CD4-positive, alpha-beta T cell (primary cell): ENCODE measurements at regions of chr13 and their contacts with region 1.

Region 1: DNA sequence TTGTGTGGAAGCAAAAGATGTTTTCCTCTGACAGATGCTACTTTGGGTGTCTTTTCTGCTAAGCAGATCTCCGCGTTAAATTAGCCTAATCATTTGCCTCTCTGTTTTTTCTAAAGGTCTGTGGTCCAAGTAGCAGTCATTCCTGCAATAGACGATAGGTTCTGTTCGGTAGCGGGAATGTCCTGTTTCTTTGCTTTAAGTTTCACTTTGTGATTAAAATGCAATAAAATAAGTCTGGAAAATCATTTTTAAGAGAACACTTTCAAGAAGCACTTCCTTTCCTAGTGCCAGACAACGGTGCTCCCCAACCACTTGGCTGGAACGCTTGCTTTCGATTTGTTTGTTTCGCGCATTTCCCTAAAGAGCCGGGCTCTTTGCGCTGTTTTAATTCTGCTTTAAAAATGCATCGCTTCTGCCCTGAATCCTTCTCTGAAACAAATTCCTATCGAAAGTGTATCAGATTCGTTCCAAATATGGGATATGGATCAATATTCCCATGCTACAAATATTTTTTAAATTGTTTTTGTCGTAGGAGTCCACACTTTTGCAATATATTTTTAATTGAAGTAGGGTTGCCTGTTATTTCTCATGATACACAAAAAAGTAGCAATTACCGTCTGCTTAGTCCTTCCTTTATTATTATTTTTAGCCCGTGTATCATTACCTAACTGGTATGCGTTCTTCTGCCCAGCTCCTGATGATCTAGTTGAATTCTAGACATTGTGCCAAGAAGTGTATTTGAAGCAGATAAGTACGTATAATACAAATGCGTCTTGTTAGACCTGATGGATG is 14.2 kb downstream of the ZIC2 start:
- DNase-seq: peak in 1 of 14 experiments; percentile 33
- ATAC-seq: no peak
- H3K4me3 ChIP-seq: no peak overlapping the region
- H3K4me3 Mint-ChIP-seq: no peak overlapping the region
- H3K27ac ChIP-seq: no peak overlapping the region
- H3K27ac Mint-ChIP-seq: no peak overlapping the region
- H3K4me1 ChIP-seq: peaks cover 27% of the 10 kb centered on the region
- H3K4me1 Mint-ChIP-seq: peaks cover 11% of the 10 kb centered on the region
- H3K27me3 ChIP-seq: peaks cover 77 to 93% of the 10 kb centered on the region in 2 experiments
- H3K27me3 Mint-ChIP-seq: peaks cover 90% of the 10 kb centered on the region
- CTCF ChIP-seq: no peak

Region 2: DNA sequence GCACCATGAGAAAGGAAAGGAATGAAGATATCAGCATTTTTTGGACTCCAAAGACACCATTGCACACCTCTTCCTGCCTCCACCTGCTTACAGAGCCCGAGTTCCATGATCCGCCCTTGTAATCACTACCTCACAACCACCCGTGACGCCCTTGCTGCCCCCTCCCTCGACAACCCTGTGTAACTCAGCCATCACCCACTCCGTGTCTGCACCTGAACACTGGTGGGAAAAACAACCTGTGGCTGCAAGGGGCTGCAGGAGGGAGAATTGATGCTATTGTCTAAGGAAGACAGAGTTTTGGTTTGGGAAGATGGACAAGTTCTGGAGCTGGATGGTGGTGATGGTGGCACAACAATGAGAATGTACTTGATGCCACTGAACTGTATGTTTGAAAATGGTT is 51.2 kb before region 1 on chr13:
- CTCF ChIA-PET with region 1: no interaction called
- POLR2A ChIA-PET with region 1: no interaction called
- intact Hi-C with region 1: no loop called
- DNase-seq: no peak
- ATAC-seq: no peak
- H3K4me3 ChIP-seq: no peak overlapping the region
- H3K4me3 Mint-ChIP-seq: no peak overlapping the region
- H3K27ac ChIP-seq: no peak overlapping the region
- H3K27ac Mint-ChIP-seq: no peak overlapping the region
- H3K4me1 ChIP-seq: no peaks in the 10 kb centered on the region
- H3K4me1 Mint-ChIP-seq: no peaks in the 10 kb centered on the region
- H3K27me3 ChIP-seq: peaks cover 15 to 33% of the 10 kb centered on the region in 2 experiments
- H3K27me3 Mint-ChIP-seq: peaks cover 71% of the 10 kb centered on the region
- CTCF ChIP-seq: no peak

Region 3: DNA sequence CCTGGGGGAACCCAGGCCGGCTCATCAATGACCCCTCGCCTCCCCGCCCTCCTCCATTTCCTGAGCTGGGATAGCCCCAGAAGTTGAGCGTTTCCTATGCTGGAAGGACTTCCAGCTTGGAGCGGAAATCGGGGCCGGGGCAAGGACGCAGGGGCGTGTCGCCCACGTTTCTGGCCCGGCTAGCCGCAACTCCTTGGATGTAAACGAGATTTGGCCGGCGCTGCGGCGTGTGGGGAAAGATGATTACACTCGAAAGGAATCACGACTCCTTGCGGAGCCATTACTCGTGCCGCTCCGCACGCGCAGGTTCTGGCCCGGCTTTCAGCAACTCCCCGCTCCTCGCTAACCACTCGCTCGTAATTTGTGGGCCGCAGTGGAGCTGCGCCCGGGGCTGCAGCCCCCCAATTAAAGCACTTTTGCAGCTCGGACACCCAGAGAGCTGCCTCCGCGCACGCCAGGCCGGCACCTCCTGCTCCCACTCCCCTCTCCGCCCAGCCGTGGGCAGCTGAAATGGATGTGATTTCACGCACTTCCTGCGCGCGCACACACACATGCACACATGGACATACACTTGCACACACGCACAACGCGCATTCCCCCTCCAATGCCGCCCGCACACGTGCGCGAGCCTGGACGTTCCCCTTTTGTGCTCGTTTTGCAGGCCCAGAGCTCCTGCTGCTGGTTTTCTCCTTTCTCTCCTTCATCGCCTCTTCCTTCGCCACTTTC is 39.9 kb before region 1 on chr13:
- CTCF ChIA-PET with region 1: no interaction called
- POLR2A ChIA-PET with region 1: no interaction called
- intact Hi-C with region 1: loop called (anchors 2 to 5 kb)
- DNase-seq: peak in 2 of 14 experiments; percentile 25
- ATAC-seq: no peak
- H3K4me3 ChIP-seq: peak overlapping the region; percentile 22
- H3K4me3 Mint-ChIP-seq: peak overlapping the region; percentile 67
- H3K27ac ChIP-seq: no peak overlapping the region
- H3K27ac Mint-ChIP-seq: no peak overlapping the region
- H3K4me1 ChIP-seq: peaks cover 46% of the 10 kb centered on the region
- H3K4me1 Mint-ChIP-seq: peaks cover 37% of the 10 kb centered on the region
- H3K27me3 ChIP-seq: peaks cover 74 to 78% of the 10 kb centered on the region in 2 experiments
- H3K27me3 Mint-ChIP-seq: peaks cover 96% of the 10 kb centered on the region
- CTCF ChIP-seq: no peak

Region 4: GRCh38 chr13:100014621-100015020 is 18.8 kb after region 1 on chr13:
- CTCF ChIA-PET with region 1: no interaction called
- POLR2A ChIA-PET with region 1: no interaction called
- intact Hi-C with region 1: no loop called
- DNase-seq: no peak
- ATAC-seq: no peak
- H3K4me3 ChIP-seq: no peak overlapping the region
- H3K4me3 Mint-ChIP-seq: no peak overlapping the region
- H3K27ac ChIP-seq: no peak overlapping the region
- H3K27ac Mint-ChIP-seq: no peak overlapping the region
- H3K4me1 ChIP-seq: no peaks in the 10 kb centered on the region
- H3K4me1 Mint-ChIP-seq: no peaks in the 10 kb centered on the region
- H3K27me3 ChIP-seq: peaks cover 0 to 2% of the 10 kb centered on the region in 2 experiments
- H3K27me3 Mint-ChIP-seq: peaks cover 22% of the 10 kb centered on the region
- CTCF ChIP-seq: no peak

Region 5: DNA sequence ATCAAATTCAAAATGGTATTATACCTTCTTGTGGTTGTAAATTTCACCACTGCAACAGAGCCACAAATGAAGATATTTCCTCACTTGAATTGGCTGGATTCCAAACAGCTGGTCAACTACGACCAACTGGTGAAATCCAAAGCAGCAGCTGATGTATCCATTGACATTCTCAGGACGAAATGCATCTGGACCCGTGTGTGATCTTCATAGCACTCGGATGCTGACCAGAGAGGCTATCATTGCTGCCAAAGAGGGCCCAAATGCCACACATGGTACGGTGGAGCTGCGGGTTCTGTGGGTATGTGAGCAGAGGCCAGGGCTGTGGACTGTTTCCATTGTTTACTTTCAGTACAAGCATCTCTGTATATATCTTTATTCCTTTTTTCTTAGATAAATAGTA is 67.5 kb after region 1 on chr13:
- CTCF ChIA-PET with region 1: no interaction called
- POLR2A ChIA-PET with region 1: no interaction called
- intact Hi-C with region 1: no loop called
- DNase-seq: no peak
- ATAC-seq: no peak
- H3K4me3 ChIP-seq: no peak overlapping the region
- H3K4me3 Mint-ChIP-seq: no peak overlapping the region
- H3K27ac ChIP-seq: no peak overlapping the region
- H3K27ac Mint-ChIP-seq: no peak overlapping the region
- H3K4me1 ChIP-seq: no peaks in the 10 kb centered on the region
- H3K4me1 Mint-ChIP-seq: no peaks in the 10 kb centered on the region
- H3K27me3 ChIP-seq: peaks cover 0 to 2% of the 10 kb centered on the region in 2 experiments
- H3K27me3 Mint-ChIP-seq: peaks cover 10% of the 10 kb centered on the region
- CTCF ChIP-seq: no peak